ENCODE measurements at regions of chr18 and their contacts with region 1.

Region 1: DNA sequence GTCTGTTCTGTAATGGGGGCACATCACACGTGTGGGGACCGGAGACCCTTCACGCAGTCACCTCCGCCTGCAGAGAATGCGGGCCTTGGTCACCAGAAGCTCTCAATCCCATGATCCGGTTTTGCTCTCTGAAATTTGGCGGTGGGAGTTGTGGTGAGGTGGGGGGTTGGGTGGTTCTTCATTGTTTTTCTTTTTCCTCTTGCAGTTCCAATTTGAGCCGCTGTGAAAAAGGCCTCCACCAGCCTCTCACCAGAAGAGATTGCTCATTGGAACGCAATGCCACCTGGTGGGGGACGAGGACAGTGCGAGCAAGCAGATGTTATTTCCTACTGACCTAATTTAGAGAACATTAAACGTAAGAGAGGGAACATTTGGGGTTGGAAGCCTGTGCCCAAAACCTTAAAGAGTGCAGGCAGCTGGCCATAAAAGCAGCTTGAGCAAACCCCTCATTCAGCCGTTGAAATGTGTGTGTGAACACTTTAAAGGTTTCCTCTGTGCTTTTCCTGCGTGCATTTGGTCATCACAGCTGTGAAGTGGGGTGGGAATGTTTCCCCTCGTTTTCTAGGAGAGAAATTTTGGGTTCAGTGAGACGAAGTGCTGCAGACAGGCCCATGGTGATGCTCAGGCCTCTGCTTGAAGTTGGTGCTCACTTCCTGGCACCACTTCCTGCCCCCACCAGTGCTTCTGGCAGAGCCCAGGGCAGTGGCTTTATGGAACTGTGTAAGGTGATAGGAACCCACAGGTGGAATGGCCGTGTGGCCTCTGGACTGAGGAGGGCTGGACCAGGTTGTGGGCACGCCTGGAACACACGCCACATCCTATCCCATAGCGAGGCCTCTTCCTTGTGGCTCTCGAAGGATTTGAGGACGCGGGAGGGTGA is 61.7 kb downstream of the ZCCHC2 start:
- DNase-seq: peak; percentile 88
- H3K4me3 ChIP-seq: peak overlapping the region; percentile 23 to 33
- H3K27ac ChIP-seq: peak overlapping the region in 1 of 2 experiments; percentile 53; a peak in 1 of 4 replicates
- H3K4me1 ChIP-seq: peaks cover 3 to 9% of the 10 kb centered on the region in 2 experiments; a peak in 2 of 4 replicates
- H3K27me3 ChIP-seq: no peaks in the 10 kb centered on the region
- CTCF ChIP-seq: peak; percentile 99
- EP300 ChIP-seq: no peak
- RAD21 ChIP-seq: peak; percentile 90

Region 2: DNA sequence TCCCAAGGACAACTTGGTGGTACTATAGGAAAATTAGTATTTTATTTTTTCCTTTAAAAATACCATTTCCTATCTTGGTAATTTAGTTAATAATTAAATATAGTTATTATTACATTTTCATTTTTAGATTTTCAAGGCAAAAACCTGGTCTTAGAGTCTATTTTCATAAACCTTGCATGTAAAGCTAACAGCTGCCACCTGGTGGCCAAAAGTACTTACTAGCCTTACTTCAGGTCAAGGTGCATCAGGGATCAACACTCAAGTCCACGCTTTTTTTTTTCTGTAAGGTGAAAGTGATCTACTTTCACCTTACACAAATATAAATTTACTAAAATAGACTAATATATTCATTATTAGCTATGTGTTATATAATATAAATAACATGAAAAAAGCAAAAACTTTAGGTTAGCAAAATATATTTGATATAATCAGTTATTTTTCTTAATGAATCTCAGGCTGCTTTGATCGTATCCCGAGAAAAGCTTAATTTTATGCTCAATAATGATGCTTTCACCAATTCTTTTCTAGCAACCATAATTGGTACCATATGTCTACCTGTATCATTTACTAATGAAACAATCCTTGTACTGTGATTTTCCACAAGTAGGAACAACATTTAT is 334.9 kb before region 1 on chr18:
- CTCF ChIA-PET with region 1: interaction called, 15 read pairs
- POLR2A ChIA-PET with region 1: no interaction called
- DNase-seq: peak; percentile 32
- H3K4me3 ChIP-seq: no peak overlapping the region
- H3K27ac ChIP-seq: no peak overlapping the region
- H3K4me1 ChIP-seq: no peaks in the 10 kb centered on the region; a peak in 1 of 4 replicates
- H3K27me3 ChIP-seq: no peaks in the 10 kb centered on the region
- CTCF ChIP-seq: peak; percentile 70
- EP300 ChIP-seq: no peak
- RAD21 ChIP-seq: peak; percentile 82

Region 3: DNA sequence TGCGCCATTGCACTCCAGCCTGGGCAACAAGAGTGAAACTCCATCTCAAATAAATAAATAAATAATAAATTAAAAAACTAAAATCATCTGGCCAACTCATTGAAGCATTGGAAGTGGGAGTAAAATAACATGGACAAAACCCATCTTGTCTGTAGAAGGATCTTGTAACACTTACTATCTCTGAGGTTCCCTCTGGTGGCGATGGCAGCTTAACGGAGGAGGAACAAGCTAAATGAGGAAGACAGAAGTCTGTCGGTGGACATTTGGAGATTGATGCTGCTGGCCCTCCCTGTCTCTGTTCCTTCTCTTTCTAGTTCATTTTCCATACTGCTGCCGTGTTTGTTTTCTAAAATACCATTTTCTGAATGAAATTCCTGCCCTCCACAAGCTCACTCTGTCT is 18.3 kb before region 1 on chr18:
- CTCF ChIA-PET with region 1: interaction called, 24 read pairs
- POLR2A ChIA-PET with region 1: no interaction called
- DNase-seq: no peak
- H3K4me3 ChIP-seq: no peak overlapping the region
- H3K27ac ChIP-seq: no peak overlapping the region
- H3K4me1 ChIP-seq: no peaks in the 10 kb centered on the region
- H3K27me3 ChIP-seq: no peaks in the 10 kb centered on the region
- CTCF ChIP-seq: peak; percentile 25; the same call in 1 of the 2 replicates
- EP300 ChIP-seq: no peak
- RAD21 ChIP-seq: no peak; the same call in 1 of the 2 replicates

Region 4: DNA sequence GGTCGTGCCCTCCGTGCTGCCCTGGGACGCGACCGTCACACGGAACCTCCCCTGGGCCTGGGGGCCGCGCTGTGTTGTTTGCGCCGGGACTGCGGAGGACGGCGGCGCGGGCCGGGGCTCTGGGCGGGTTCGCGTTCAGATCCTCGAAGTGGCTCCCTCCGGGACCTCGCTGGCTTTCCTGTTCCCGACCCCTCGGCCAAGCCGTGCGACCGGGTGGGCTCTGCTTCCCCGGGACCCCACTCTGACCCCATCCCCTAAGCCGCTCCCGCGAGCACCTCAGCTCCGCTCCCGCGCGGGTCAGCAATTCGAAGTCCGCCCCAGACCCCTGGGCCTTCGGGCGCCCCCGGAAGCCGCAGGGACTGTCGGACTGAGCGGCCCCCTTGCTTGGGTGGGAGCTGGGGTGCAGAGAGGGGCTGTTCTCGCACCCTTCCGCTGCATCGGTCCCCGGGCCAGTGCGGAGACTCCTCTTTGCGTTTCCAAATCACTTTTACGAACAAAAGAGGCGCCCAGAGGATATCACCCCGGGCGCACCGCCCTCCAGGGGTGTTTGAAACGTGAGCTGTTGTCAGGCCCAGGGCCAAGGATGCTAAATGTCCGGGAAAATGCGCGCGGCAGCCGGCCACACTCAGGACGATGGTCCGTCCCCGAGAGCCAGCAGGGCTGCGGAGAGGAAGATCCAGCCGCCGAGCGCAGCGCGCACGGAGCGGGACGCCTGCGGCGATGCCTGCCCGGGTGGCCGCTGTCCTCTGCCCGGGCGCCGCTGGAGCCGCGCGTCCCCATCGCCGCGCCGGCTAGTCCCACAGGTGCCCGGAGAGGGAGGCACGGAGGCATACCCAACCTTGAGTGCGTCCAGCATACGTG is 11.9 kb after region 1 on chr18:
- CTCF ChIA-PET with region 1: interaction called, 18 read pairs
- POLR2A ChIA-PET with region 1: no interaction called
- DNase-seq: peak; percentile 83
- H3K4me3 ChIP-seq: peak overlapping the region in 1 of 2 experiments; percentile 26; a peak in 1 of 4 replicates
- H3K27ac ChIP-seq: no peak overlapping the region
- H3K4me1 ChIP-seq: peaks cover 0 to 5% of the 10 kb centered on the region in 2 experiments; a peak in 1 of 4 replicates
- H3K27me3 ChIP-seq: no peaks in the 10 kb centered on the region; the same call in 1 of the 2 replicates
- CTCF ChIP-seq: no peak
- EP300 ChIP-seq: no peak
- RAD21 ChIP-seq: no peak

Region 5: GRCh38 chr18:62714671-62715435 is 130.4 kb after region 1 on chr18:
- CTCF ChIA-PET with region 1: interaction called, 19 read pairs
- POLR2A ChIA-PET with region 1: no interaction called
- DNase-seq: peak; percentile 96
- H3K4me3 ChIP-seq: peak overlapping the region; percentile 56 to 77
- H3K27ac ChIP-seq: peak overlapping the region; percentile 73 to 77
- H3K4me1 ChIP-seq: peaks cover 0 to 11% of the 10 kb centered on the region in 2 experiments; a peak in 3 of 4 replicates
- H3K27me3 ChIP-seq: no peaks in the 10 kb centered on the region
- CTCF ChIP-seq: peak; percentile 88
- EP300 ChIP-seq: no peak
- RAD21 ChIP-seq: peak; percentile 84

Region 6: DNA sequence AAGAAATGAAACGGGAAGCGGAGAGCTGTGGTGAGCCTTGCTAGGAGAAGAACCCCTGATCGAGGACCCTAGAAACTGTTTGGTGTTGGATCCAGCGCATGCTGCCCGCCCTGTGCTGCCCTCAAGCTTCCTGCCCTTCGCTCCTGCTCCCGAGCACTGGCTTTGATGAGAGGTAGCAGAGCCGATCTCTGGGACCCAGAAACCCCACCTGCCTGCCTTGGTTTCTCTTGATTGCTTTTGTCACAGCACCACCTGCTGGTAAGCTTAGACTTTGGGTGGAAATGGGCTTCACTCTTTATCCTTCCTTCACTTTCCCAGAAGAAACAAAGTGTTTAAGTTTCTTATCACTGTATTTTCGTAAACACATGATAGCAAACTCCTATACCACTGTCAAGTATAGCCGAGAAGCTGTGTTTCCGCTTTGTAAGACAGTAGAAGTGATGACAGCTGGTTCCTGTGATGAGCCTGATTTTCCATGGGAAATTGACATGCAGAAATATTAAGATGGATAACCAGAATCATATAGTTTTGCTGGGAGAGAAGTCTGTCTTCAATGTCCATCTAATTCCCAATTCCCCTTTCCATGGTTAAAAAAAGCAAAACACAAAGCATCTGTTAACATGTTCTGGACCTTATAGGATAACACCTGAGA is 398.2 kb after region 1 on chr18:
- CTCF ChIA-PET with region 1: interaction called, 124 read pairs
- POLR2A ChIA-PET with region 1: no interaction called
- DNase-seq: peak; percentile 81
- H3K4me3 ChIP-seq: peak overlapping the region in 1 of 2 experiments; percentile 11; a peak in 1 of 4 replicates
- H3K27ac ChIP-seq: no peak overlapping the region
- H3K4me1 ChIP-seq: peaks cover 0 to 3% of the 10 kb centered on the region in 2 experiments; a peak in 1 of 4 replicates
- H3K27me3 ChIP-seq: no peaks in the 10 kb centered on the region
- CTCF ChIP-seq: peak; percentile 87
- EP300 ChIP-seq: no peak
- RAD21 ChIP-seq: peak; percentile 91

Measured in SK-N-SH (cell line).